K562 (cell line): ENCODE measurements at regions of chr17 and their contacts with region 1.

Region 1: DNA sequence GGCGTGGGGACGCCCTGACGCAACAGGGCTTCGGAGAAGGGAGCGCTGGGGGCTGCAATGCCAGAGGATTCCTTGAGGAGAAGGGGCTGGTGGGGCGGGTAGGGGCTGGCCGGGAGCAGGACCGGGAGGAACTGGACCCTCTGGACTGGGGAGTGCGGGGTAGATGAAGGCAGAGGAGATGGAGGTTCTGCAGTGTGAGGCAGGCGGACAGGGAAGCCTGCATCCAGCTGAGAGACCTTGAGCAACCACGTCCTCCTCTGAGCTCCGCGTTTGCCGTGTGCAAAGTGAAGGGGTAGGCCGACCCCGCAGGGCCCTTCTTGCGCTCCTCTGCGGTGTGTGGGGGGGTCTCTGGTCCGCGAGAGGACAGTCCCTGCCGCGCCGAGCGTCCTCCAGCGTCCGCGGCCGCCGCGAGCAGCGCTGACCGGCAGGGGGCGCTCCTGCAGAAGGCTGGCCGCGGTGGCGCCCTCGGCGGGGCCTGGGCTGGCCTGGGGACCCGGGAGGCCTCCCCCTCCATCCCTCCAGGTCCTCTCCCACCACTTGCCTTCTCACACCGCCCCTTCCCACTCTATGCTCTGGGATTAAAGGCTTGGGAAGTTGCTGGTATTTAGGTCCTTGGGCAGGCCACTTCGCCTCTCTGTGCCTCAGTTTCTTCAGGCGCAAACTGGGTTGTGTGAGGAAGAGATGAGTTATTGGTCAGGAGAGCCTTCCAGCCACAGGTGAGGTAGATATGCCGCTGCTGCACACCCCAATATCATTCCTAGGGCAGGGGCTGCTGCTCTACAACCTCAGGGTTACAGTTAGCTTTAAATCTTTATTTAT is 9.6 kb upstream of the WNT9B start:
- DNase-seq: peak; percentile 52 to 82 (median 81)
- ATAC-seq: peak; percentile 97
- H3K4me3 ChIP-seq: peak overlapping the region; percentile 9; the same call in 1 of the 2 replicates
- H3K27ac ChIP-seq: no peak overlapping the region
- H3K4me1 ChIP-seq: peaks cover 0 to 9% of the 10 kb centered on the region in 2 experiments; a peak in 4 of 5 replicates
- H3K27me3 ChIP-seq: peaks cover 0 to 7% of the 10 kb centered on the region in 2 experiments; a peak in 3 of 5 replicates
- CTCF ChIP-seq: peak; percentile 79 to 92 (median 90)
- EP300 ChIP-seq: no peak
- POLR2A ChIP-seq: no peak
- RAD21 ChIP-seq: peak; percentile 56 to 88

Region 2: GRCh38 chr17:45976755-45977505 is 864.8 kb before region 1 on chr17:
- CTCF ChIA-PET with region 1: no interaction called
- POLR2A ChIA-PET with region 1: no interaction called
- in situ Hi-C with region 1: loop called (anchors 25 kb)
- intact Hi-C with region 1: no loop called
- DNase-seq: peak; percentile 83 to 96 (median 90)
- ATAC-seq: peak; percentile 96
- H3K4me3 ChIP-seq: no peak overlapping the region
- H3K27ac ChIP-seq: peak overlapping the region; percentile 82
- H3K4me1 ChIP-seq: peaks cover 44% of the 10 kb centered on the region in 2 experiments
- H3K27me3 ChIP-seq: no peaks in the 10 kb centered on the region
- CTCF ChIP-seq: no peak
- EP300 ChIP-seq: peak; percentile 88
- POLR2A ChIP-seq: peak; percentile 51; the same call in 1 of the 2 replicates
- RAD21 ChIP-seq: 0 out of 4 replicates have a peak, but pooled peaks of 1 of the 2 experiments have one; percentile 2

Region 3: GRCh38 chr17:47009759-47010594 is 168.2 kb after region 1 on chr17:
- CTCF ChIA-PET with region 1: no interaction called
- POLR2A ChIA-PET with region 1: no interaction called
- in situ Hi-C with region 1: no loop called
- intact Hi-C with region 1: loop called (anchors 5 kb)
- DNase-seq: no peak
- ATAC-seq: no peak
- H3K4me3 ChIP-seq: no peak overlapping the region
- H3K27ac ChIP-seq: no peak overlapping the region
- H3K4me1 ChIP-seq: peaks cover 0 to 3% of the 10 kb centered on the region in 2 experiments; a peak in 1 of 5 replicates
- H3K27me3 ChIP-seq: no peaks in the 10 kb centered on the region; a peak in 1 of 5 replicates
- CTCF ChIP-seq: no peak
- EP300 ChIP-seq: no peak
- POLR2A ChIP-seq: no peak
- RAD21 ChIP-seq: no peak